Endothelial cell of umbilical vein (primary cell): ENCODE measurements at regions of chr1 and their contacts with region 1.

Region 1: GRCh38 chr1:223087291-223088255 is 55.5 kb downstream of the TLR5 start:
- DNase-seq: no peak
- H3K4me3 ChIP-seq: no peak overlapping the region
- H3K27ac ChIP-seq: no peak overlapping the region
- H3K4me1 ChIP-seq: no peaks in the 10 kb centered on the region
- H3K27me3 ChIP-seq: peaks cover 0 to 8% of the 10 kb centered on the region in 2 experiments
- CTCF ChIP-seq: no peak
- POLR2A ChIP-seq: no peak

Region 2: GRCh38 chr1:222736972-222737371 is 350.6 kb before region 1 on chr1 and contains the start of gene FAM177B:
- CTCF ChIA-PET with region 1: interaction called, 39 read pairs
- POLR2A ChIA-PET with region 1: no interaction called
- dilution Hi-C with region 1: no loop called
- intact Hi-C with region 1: no loop called
- DNase-seq: no peak
- H3K4me3 ChIP-seq: no peak within 1 kb of the TSS
- H3K27ac ChIP-seq: no peak within 1 kb of the TSS
- H3K4me1 ChIP-seq: no peaks in the 10 kb centered on the region
- H3K27me3 ChIP-seq: no peaks in the 10 kb centered on the region
- CTCF ChIP-seq: no peak
- POLR2A ChIP-seq: no peak
- total RNA-seq, gene FAM177B: not detected in 2 replicates

Region 3: DNA sequence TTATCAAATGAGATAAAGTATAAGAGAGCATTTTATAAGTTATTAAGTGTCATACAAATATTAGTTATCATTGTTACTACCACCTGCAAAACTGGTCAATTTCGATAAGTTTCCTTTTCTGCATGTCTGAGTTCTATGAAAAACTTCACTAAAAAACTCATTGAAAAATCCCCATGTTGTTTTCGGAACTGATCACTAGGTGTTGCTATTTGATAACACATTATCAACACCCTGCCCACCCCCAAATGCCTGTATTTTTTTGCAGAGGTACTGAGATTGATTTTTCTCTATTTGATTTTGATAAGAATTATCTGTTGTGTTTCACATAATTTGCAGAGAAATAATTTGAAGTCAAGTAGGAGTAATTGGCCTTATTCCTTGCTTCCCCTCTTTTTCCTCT is 294.8 kb before region 1 on chr1:
- CTCF ChIA-PET with region 1: interaction called, 59 read pairs
- POLR2A ChIA-PET with region 1: no interaction called
- dilution Hi-C with region 1: loop called (anchors 25 kb)
- intact Hi-C with region 1: no loop called
- DNase-seq: peak; percentile 44
- H3K4me3 ChIP-seq: no peak overlapping the region
- H3K27ac ChIP-seq: no peak overlapping the region
- H3K4me1 ChIP-seq: peaks cover 10% of the 10 kb centered on the region
- H3K27me3 ChIP-seq: peaks cover 0 to 2% of the 10 kb centered on the region in 2 experiments
- CTCF ChIP-seq: peak; percentile 20 to 29
- POLR2A ChIP-seq: no peak

Region 4: DNA sequence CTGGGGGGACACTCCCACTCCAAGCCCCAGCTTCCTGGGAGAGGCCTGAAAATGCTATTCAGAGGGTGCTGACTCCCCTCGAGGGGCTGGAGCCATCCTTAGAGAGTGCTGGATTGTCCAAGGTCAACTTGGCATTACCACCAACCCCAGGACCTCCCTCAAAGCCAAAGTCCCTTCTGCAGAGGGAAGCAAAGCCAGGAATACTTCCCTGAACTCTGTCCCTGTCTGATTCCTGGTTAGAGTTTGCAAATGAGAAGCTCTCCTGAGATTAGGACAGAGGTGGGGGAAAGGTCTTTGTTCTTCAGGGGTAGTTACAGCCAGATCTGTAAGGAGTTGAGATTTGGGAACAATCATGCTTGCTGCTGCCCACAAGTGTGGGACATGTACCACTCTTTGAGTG is 10.1 kb after region 1 on chr1:
- CTCF ChIA-PET with region 1: interaction called, 64 read pairs
- POLR2A ChIA-PET with region 1: interaction called, 4 read pairs
- dilution Hi-C with region 1: no loop called
- intact Hi-C with region 1: no loop called
- DNase-seq: no peak
- H3K4me3 ChIP-seq: no peak overlapping the region
- H3K27ac ChIP-seq: no peak overlapping the region
- H3K4me1 ChIP-seq: peaks cover 7% of the 10 kb centered on the region
- H3K27me3 ChIP-seq: peaks cover 0 to 3% of the 10 kb centered on the region in 2 experiments
- CTCF ChIP-seq: no peak
- POLR2A ChIP-seq: no peak

Region 5: GRCh38 chr1:223114871-223115270 is 27.3 kb after region 1 on chr1:
- CTCF ChIA-PET with region 1: interaction called, 351 read pairs
- POLR2A ChIA-PET with region 1: no interaction called
- dilution Hi-C with region 1: no loop called
- intact Hi-C with region 1: no loop called
- DNase-seq: peak; percentile 81
- H3K4me3 ChIP-seq: no peak overlapping the region
- H3K27ac ChIP-seq: peak overlapping the region; percentile 32
- H3K4me1 ChIP-seq: peaks cover 14% of the 10 kb centered on the region
- H3K27me3 ChIP-seq: no peaks in the 10 kb centered on the region
- CTCF ChIP-seq: no peak
- POLR2A ChIP-seq: peak; percentile 30